K562 (cell line): ENCODE measurements at regions of chr11 and their contacts with region 1.

Region 1: DNA sequence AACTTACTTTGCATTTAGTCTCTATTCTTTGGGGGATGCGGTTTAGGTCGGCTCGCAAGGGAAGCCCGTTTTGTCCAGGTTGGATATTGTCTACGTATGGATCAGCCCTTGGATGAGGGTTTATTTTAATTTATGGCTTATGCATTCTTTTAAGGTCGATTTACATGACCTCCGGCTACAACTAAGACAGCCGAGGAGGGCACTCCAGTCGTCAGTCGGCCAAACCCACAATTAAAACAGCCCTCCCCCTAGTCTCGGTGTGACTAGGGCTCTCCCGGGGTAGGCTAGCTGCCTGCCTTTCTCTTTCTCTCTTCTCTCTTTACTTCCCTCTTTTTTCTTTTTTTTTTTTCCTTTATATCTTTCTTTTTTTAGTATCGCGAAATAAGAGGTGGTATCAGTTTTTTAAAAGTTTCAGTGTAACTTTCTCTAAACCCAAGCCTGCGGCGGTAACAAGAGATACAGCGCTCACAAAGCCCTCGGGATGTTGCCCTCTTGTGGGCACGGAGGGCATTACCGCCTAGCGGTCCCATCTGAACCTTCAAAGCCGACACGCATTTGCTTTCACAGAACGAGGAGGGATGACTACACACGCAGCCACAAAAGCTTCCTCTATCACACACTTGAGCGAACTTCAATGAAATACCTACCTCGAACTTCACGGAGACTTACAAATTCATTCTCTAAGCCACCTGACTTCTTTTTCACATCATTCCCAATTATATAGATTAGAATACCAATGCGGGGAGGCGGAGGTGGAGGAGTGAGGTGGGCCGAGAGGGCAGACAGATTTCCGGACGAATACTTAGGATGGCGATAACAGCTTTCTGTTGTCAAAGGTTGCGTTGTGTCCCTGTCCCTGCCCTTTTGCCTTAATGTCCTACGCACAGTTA is 132.3 kb upstream of the C11orf58 start:
- DNase-seq: peak; percentile 73 to 94 (median 78)
- ATAC-seq: peak; percentile 60
- H3K4me3 ChIP-seq: peak overlapping the region; percentile 71
- H3K27ac ChIP-seq: peak overlapping the region; percentile 90
- H3K4me1 ChIP-seq: peaks cover 16 to 45% of the 10 kb centered on the region in 2 experiments; a peak in 4 of 5 replicates
- H3K27me3 ChIP-seq: no peaks in the 10 kb centered on the region
- CTCF ChIP-seq: peak; percentile 88 to 94 (median 89)
- EP300 ChIP-seq: peak; percentile 13; the same call in 1 of the 2 replicates
- POLR2A ChIP-seq: no peak
- RAD21 ChIP-seq: peak; percentile 82 to 84

Region 2: GRCh38 chr11:15826826-15827225 is 779.3 kb before region 1 on chr11:
- CTCF ChIA-PET with region 1: no interaction called
- POLR2A ChIA-PET with region 1: no interaction called
- in situ Hi-C with region 1: loop called (anchors 25 kb)
- intact Hi-C with region 1: loop called (anchors 2 kb)
- DNase-seq: peak; percentile 58 to 68 (median 67)
- ATAC-seq: peak; percentile 97
- H3K4me3 ChIP-seq: no peak overlapping the region
- H3K27ac ChIP-seq: no peak overlapping the region
- H3K4me1 ChIP-seq: no peaks in the 10 kb centered on the region
- H3K27me3 ChIP-seq: peaks cover 4 to 7% of the 10 kb centered on the region in 2 experiments; a peak in 2 of 5 replicates
- CTCF ChIP-seq: peak; percentile 71 to 88 (median 75)
- EP300 ChIP-seq: no peak
- POLR2A ChIP-seq: no peak
- RAD21 ChIP-seq: peak; percentile 44 to 75

Region 3: GRCh38 chr11:15941201-15941770 is 664.9 kb before region 1 on chr11:
- CTCF ChIA-PET with region 1: interaction called, 14 read pairs
- POLR2A ChIA-PET with region 1: no interaction called
- in situ Hi-C with region 1: no loop called
- intact Hi-C with region 1: loop called (anchors 5 kb)
- DNase-seq: peak; percentile 76 to 96 (median 92)
- ATAC-seq: peak; percentile 97
- H3K4me3 ChIP-seq: no peak overlapping the region
- H3K27ac ChIP-seq: no peak overlapping the region
- H3K4me1 ChIP-seq: peaks cover 0 to 14% of the 10 kb centered on the region in 2 experiments; a peak in 3 of 5 replicates
- H3K27me3 ChIP-seq: peaks cover 0 to 13% of the 10 kb centered on the region in 2 experiments; a peak in 3 of 5 replicates
- CTCF ChIP-seq: peak; percentile 88 to 97 (median 93)
- EP300 ChIP-seq: no peak
- POLR2A ChIP-seq: no peak
- RAD21 ChIP-seq: peak; percentile 89 to 91

Region 4: GRCh38 chr11:16191212-16191867 is 414.8 kb before region 1 on chr11:
- CTCF ChIA-PET with region 1: interaction called, 24 read pairs
- POLR2A ChIA-PET with region 1: interaction called, 5 read pairs
- in situ Hi-C with region 1: loop called (anchors 5 kb)
- intact Hi-C with region 1: no loop called
- DNase-seq: peak in 2 of 4 experiments; percentile 35 to 54
- ATAC-seq: peak; percentile 75
- H3K4me3 ChIP-seq: no peak overlapping the region
- H3K27ac ChIP-seq: no peak overlapping the region
- H3K4me1 ChIP-seq: peaks cover 3 to 15% of the 10 kb centered on the region in 2 experiments; a peak in 4 of 5 replicates
- H3K27me3 ChIP-seq: no peaks in the 10 kb centered on the region
- CTCF ChIP-seq: peak in 2 of 3 experiments; percentile 53 to 67; a peak in 3 of 6 replicates
- EP300 ChIP-seq: no peak
- POLR2A ChIP-seq: no peak
- RAD21 ChIP-seq: peak; percentile 75 to 80

Region 5: DNA sequence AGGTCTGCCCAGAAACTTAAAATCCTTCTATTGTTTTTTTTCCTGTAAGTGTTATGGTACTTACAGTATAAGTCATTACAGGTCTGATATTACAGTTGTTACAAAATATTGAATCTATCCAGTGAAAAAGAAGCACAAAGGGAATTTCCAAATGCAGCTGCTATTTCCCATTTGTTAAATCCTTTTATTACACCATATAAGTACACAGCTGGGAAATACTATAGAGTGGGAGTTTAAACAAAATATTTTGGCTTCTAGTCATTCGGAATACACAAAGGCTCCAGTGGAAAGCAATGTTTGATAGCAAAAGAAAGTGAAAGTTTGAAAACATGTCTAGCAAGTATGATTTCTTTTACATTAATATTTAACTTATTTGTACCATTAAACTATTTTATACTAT is 267.7 kb before region 1 on chr11:
- CTCF ChIA-PET with region 1: no interaction called
- POLR2A ChIA-PET with region 1: no interaction called
- in situ Hi-C with region 1: no loop called
- intact Hi-C with region 1: loop called (anchors 5 kb)
- DNase-seq: no peak
- ATAC-seq: peak; percentile 42
- H3K4me3 ChIP-seq: no peak overlapping the region
- H3K27ac ChIP-seq: peak overlapping the region; percentile 89
- H3K4me1 ChIP-seq: peaks cover 0 to 28% of the 10 kb centered on the region in 2 experiments; a peak in 4 of 5 replicates
- H3K27me3 ChIP-seq: no peaks in the 10 kb centered on the region
- CTCF ChIP-seq: no peak
- EP300 ChIP-seq: no peak
- POLR2A ChIP-seq: no peak
- RAD21 ChIP-seq: no peak

Region 6: GRCh38 chr11:16382638-16383380 is 223.3 kb before region 1 on chr11:
- CTCF ChIA-PET with region 1: no interaction called
- POLR2A ChIA-PET with region 1: interaction called, 4 read pairs
- in situ Hi-C with region 1: no loop called
- intact Hi-C with region 1: loop called (anchors 5 kb)
- DNase-seq: peak in 1 of 4 experiments; percentile 25
- ATAC-seq: peak; percentile 42
- H3K4me3 ChIP-seq: no peak overlapping the region
- H3K27ac ChIP-seq: peak overlapping the region; percentile 62; the same call in 2 of the 3 replicates
- H3K4me1 ChIP-seq: peaks cover 0 to 15% of the 10 kb centered on the region in 2 experiments; a peak in 3 of 5 replicates
- H3K27me3 ChIP-seq: no peaks in the 10 kb centered on the region
- CTCF ChIP-seq: no peak
- EP300 ChIP-seq: no peak
- POLR2A ChIP-seq: no peak
- RAD21 ChIP-seq: no peak

Region 7: DNA sequence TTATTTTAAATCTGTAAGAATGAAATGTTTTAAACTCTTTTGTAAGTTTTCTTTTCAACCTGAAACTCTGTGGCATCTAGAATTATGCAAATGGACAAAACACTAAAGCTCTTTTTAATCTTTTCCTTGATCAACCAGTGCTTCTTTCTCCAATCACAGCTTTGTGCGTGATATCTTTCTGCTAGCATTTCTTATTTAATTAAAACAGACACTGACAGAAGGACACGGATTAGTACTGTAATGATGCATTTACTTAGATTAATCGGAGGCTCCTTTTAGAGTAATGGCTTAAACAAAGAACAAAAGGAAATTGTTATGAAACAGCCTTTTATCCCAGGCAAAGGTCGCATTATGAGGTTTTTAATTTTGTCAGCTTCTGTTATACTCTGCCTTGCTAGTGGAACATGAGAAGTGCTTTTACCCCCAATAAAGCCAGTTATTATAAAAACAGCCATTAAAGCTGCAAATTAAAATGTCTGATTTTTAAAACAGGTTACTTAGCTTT is 201.3 kb before region 1 on chr11:
- CTCF ChIA-PET with region 1: no interaction called
- POLR2A ChIA-PET with region 1: no interaction called
- in situ Hi-C with region 1: no loop called
- intact Hi-C with region 1: no loop called
- DNase-seq: no peak
- ATAC-seq: no peak
- H3K4me3 ChIP-seq: no peak overlapping the region
- H3K27ac ChIP-seq: no peak overlapping the region
- H3K4me1 ChIP-seq: peaks cover 0 to 14% of the 10 kb centered on the region in 2 experiments; a peak in 3 of 5 replicates
- H3K27me3 ChIP-seq: no peaks in the 10 kb centered on the region
- CTCF ChIP-seq: no peak
- EP300 ChIP-seq: no peak
- POLR2A ChIP-seq: no peak
- RAD21 ChIP-seq: no peak